ENCODE measurements at regions of chr9 and their contacts with region 1.

Region 1: DNA sequence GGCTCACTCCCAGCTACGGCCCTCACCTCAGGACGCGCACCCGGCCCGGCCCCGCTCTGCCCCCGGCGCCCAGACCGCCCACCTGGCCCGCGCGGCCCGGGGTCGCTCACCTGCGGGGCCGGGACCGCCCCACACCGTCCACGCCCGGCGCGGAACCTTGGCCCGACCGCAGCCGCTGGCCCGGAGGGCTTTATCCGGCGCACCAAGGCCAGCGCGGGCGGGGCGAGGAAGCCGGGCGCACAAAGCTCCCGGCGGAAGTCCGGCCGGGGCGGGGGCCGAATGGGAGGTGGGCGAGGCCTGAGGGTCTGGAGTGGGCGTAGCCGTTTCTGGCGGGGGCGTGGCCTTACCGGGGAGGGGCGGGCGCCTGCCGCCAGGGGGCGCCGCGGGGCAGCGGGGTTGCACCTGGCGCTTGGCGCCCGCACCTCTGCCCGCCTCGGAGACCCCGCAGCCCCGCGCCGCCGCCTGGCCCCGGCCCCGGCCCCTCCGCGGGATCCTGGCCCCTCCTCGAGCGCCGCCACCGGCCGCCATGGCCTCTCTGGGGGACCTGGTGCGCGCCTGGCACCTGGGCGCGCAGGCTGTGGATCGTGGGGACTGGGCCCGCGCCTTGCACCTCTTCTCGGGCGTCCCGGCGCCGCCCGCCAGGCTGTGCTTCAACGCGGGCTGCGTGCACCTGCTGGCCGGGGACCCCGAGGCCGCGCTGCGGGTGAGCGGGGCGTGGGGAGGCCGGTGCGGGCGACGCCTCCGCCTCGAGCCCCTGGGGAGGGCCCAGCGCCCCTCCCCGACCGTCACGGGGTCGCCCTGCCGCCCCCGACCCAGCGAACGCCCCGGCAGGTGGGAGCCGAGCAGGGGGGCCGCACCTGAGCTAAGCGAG is at the starts of genes EXD3 and NOXA1:
- DNase-seq: peak; percentile 91 to 97 (median 94)
- ATAC-seq: peak; percentile 89
- H3K4me3 ChIP-seq: peak within 1 kb of the TSS; percentile 65
- H3K4me3 Mint-ChIP-seq: peak within 1 kb of the TSS; percentile 91
- H3K27ac ChIP-seq: no peak within 1 kb of the TSS
- H3K27ac Mint-ChIP-seq: peak within 1 kb of the TSS; percentile 69
- H3K4me1 ChIP-seq: peaks cover 19% of the 10 kb centered on the region
- H3K4me1 Mint-ChIP-seq: peaks cover 18% of the 10 kb centered on the region
- H3K27me3 ChIP-seq: no peaks in the 10 kb centered on the region
- H3K27me3 Mint-ChIP-seq: no peaks in the 10 kb centered on the region
- CTCF ChIP-seq: no peak
- total RNA-seq, gene EXD3: 14.9 to 16.9 TPM
- total RNA-seq, gene NOXA1: 6.7 to 7.7 TPM

Region 2: DNA sequence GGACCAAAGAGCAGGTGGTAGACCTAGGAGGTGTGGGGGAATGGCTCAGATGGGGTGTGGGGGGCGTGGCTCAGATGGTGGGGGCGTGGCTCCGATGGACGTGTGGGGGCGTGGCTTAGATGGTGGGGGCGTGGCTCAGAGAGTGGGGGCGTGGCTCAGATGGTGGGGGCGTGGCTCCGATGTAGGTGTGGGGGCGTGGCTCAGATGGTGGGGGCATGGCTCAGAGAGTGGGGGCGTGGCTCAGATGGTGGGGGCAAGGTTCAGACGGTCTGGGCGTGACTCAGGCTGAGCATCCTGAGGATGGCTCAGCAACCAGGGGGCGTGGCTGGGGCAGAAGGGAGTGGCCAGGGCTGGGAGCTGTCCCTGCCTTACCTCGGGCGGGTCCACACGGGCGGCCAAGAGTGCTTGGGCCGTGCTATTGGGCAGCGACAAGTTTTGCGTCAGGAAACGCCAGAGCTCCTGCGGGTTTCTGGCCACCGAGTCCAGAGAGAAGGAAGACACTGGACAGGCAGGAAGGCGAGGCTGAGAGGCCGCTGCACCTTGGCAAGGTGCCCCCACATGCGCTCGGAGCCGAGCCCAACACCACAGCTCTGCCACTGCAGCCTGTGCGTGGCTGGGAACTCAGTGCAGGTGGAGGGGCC is 401.1 kb before region 1 on chr9:
- CTCF ChIA-PET with region 1: no interaction called
- POLR2A ChIA-PET with region 1: no interaction called
- intact Hi-C with region 1: no loop called
- DNase-seq: peak; percentile 44 to 90 (median 65)
- ATAC-seq: peak; percentile 86
- H3K4me3 ChIP-seq: no peak overlapping the region
- H3K4me3 Mint-ChIP-seq: peak overlapping the region; percentile 54
- H3K27ac ChIP-seq: no peak overlapping the region
- H3K27ac Mint-ChIP-seq: no peak overlapping the region
- H3K4me1 ChIP-seq: peaks cover 35% of the 10 kb centered on the region
- H3K4me1 Mint-ChIP-seq: peaks cover 9% of the 10 kb centered on the region
- H3K27me3 ChIP-seq: no peaks in the 10 kb centered on the region
- H3K27me3 Mint-ChIP-seq: no peaks in the 10 kb centered on the region
- CTCF ChIP-seq: no peak

Region 3: DNA sequence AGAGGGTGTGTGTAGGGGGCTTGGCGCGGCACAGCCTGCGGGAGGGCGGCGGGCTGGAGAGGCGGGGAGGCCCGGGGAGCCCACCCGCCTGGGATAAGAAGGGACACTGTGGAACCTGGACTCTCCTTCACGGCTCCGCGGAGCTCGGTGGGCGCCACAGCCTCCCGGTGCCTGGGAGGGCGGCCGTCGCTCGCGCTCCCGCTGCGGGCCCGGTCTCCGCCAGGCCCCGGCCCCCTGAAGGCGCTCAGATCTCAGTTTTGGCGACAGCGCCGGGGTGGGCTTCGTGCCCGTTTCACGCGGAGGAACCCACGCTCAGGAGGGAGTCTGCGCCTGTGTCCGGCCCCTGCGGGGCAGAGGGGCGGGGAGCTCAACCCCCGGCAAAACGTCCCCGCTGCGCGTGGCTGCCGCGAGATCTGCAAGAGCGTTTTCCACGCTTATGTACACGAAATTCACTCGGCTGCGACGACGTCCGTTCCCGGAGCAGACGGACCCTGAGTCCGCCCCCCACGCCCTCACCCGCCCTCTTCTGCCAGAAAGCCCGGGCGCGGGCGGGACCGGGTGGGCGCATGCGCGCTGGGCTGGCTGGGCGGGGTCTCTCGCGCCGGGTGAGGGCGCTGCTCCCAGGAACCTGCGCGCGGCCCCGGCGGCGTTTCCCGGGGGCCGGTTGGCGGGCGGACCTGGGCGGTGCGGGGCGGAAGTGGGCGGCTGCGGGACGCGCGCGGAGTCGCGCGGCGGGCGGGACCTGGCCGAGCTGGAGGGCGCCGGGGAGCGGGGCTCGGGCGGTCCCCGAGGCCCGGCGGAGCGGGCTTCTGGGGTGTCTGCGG is 168.4 kb before region 1 on chr9 and contains the start of gene NELFB:
- CTCF ChIA-PET with region 1: no interaction called
- POLR2A ChIA-PET with region 1: interaction called, 13 read pairs
- intact Hi-C with region 1: loop called in 1 of 2 experiments (anchors 1 kb)
- DNase-seq: peak; percentile 87 to 98 (median 96)
- ATAC-seq: peak; percentile 94
- H3K4me3 ChIP-seq: peak within 1 kb of the TSS; percentile 90
- H3K4me3 Mint-ChIP-seq: peak within 1 kb of the TSS; percentile 94
- H3K27ac ChIP-seq: no peak within 1 kb of the TSS
- H3K27ac Mint-ChIP-seq: peak within 1 kb of the TSS; percentile 82
- H3K4me1 ChIP-seq: peaks cover 25% of the 10 kb centered on the region
- H3K4me1 Mint-ChIP-seq: peaks cover 16% of the 10 kb centered on the region
- H3K27me3 ChIP-seq: no peaks in the 10 kb centered on the region
- H3K27me3 Mint-ChIP-seq: no peaks in the 10 kb centered on the region
- CTCF ChIP-seq: no peak
- total RNA-seq, gene NELFB: 20.7 to 21.2 TPM

Region 4: DNA sequence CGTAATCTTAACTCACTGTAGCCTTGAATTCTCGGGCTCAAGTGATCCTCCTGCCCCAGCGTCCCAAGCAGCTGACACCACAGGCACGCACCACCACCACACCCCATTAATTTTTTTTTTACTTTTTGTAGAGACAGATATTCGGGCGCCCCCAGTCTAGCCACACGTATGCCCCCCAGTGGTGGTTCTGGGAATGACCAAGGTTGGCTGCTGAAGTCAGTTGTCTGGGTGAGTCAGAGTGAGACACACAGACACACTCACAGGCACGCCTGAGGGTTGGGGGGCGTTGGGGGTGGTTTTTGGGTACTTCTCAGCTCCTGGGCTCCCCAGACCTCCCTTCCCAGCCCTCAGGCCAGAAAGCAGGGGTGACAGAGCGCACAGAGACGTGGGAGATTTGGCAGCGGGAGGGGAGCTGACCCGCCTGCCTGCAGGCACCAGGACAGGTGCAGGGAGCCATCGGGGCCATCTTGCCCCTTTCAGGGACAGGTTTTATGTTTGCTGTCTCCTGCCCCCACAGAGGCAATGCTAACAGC is 22.1 kb after region 1 on chr9:
- CTCF ChIA-PET with region 1: interaction called, 12 read pairs
- POLR2A ChIA-PET with region 1: interaction called, 5 read pairs
- intact Hi-C with region 1: loop called in 1 of 2 experiments (anchors 1 kb)
- DNase-seq: peak; percentile 75 to 91 (median 84)
- ATAC-seq: peak; percentile 74
- H3K4me3 ChIP-seq: no peak overlapping the region
- H3K4me3 Mint-ChIP-seq: peak overlapping the region; percentile 49
- H3K27ac ChIP-seq: no peak overlapping the region
- H3K27ac Mint-ChIP-seq: peak overlapping the region; percentile 19
- H3K4me1 ChIP-seq: peaks cover 35% of the 10 kb centered on the region
- H3K4me1 Mint-ChIP-seq: peaks cover 31% of the 10 kb centered on the region
- H3K27me3 ChIP-seq: peaks cover 0 to 2% of the 10 kb centered on the region in 2 experiments
- H3K27me3 Mint-ChIP-seq: peaks cover 17% of the 10 kb centered on the region
- CTCF ChIP-seq: peak; percentile 79

Region 5: DNA sequence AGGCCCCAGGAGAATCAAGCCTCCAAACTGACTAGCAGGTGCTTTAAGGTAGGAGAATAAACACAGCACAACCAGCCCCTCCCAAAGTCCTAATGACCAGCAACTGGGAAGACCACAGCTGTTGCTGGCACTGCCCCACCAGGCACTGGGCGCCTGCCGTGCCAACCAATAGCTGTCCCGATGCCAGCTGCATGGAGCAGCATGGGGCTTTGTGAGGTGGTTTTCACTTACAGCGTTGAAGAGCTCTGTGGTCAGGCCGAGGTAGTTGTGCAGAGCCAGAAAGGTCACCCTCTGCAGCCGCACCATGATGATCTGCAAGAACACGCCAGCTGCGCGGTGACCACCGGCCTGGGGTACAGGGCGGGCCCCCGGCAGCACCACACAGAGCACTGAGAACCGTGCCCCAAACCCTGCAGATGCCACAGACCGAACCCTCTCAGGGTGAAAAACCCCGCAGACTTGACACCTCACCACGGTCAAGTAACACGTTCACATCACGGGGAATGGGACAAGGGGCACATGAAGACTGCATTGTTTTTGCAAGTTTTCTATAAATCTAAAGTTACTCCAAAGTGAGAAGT is 98.3 kb after region 1 on chr9:
- CTCF ChIA-PET with region 1: no interaction called
- POLR2A ChIA-PET with region 1: no interaction called
- intact Hi-C with region 1: loop called (anchors 1 to 5 kb)
- DNase-seq: no peak
- ATAC-seq: no peak
- H3K4me3 ChIP-seq: no peak overlapping the region
- H3K4me3 Mint-ChIP-seq: no peak overlapping the region
- H3K27ac ChIP-seq: no peak overlapping the region
- H3K27ac Mint-ChIP-seq: no peak overlapping the region
- H3K4me1 ChIP-seq: peaks cover 3% of the 10 kb centered on the region
- H3K4me1 Mint-ChIP-seq: peaks cover 4% of the 10 kb centered on the region
- H3K27me3 ChIP-seq: no peaks in the 10 kb centered on the region
- H3K27me3 Mint-ChIP-seq: no peaks in the 10 kb centered on the region
- CTCF ChIP-seq: no peak

Region 6: DNA sequence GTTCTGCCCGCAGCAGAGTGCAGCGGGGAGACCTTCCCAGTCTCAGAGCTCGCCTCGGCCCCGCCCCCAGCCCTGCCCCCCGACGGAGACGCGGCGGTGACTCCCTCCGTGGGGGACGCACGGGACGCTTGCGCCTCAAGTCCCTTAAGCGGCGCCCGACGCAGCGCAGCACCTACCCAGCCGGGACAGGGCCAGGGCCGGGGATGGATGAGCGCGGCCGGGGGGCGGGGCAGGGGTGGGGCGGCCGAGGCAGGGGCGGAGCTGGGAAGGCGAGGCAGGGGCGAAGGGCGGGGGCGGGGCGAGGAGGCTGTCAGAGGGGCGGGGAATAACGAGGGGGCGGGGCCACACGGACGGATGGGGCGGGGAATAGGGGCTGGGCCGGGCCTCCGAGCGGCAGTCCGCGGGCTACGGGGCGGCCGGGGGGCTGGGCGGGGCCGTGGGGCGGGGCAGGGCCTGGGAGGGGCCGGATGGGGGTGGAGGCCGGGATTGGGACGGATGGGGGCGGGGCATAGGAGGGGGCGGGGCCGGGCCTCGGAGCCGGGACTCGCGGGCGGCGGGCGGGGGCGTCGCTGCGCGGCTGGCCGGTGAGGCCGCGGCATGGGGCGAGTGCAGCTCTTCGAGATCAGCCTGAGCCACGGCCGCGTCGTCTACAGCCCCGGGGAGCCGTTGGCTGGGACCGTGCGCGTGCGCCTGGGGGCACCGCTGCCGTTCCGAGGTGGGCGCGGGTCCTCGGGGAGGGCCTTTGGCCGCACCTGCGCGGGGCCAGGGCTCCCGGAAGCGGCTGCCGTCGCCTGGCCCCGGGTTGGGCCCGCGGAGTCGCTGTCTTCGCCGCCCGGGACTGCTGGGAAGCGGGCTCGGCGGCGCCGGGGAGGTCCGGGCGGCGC is 182.1 kb after region 1 on chr9 and contains the start of gene ARRDC1:
- CTCF ChIA-PET with region 1: no interaction called
- POLR2A ChIA-PET with region 1: no interaction called
- intact Hi-C with region 1: loop called in 1 of 2 experiments (anchors 5 kb)
- DNase-seq: peak; percentile 87 to 98 (median 94)
- ATAC-seq: peak; percentile 89
- H3K4me3 ChIP-seq: peak within 1 kb of the TSS; percentile 58
- H3K4me3 Mint-ChIP-seq: peak within 1 kb of the TSS; percentile 88
- H3K27ac ChIP-seq: no peak within 1 kb of the TSS
- H3K27ac Mint-ChIP-seq: peak within 1 kb of the TSS; percentile 47
- H3K4me1 ChIP-seq: peaks cover 31% of the 10 kb centered on the region
- H3K4me1 Mint-ChIP-seq: peaks cover 22% of the 10 kb centered on the region
- H3K27me3 ChIP-seq: no peaks in the 10 kb centered on the region
- H3K27me3 Mint-ChIP-seq: no peaks in the 10 kb centered on the region
- CTCF ChIP-seq: no peak
- total RNA-seq, gene ARRDC1: 45.5 to 50.7 TPM